PC-9 (cell line): ENCODE measurements at regions of chr4 and their contacts with region 1.

Region 1: DNA sequence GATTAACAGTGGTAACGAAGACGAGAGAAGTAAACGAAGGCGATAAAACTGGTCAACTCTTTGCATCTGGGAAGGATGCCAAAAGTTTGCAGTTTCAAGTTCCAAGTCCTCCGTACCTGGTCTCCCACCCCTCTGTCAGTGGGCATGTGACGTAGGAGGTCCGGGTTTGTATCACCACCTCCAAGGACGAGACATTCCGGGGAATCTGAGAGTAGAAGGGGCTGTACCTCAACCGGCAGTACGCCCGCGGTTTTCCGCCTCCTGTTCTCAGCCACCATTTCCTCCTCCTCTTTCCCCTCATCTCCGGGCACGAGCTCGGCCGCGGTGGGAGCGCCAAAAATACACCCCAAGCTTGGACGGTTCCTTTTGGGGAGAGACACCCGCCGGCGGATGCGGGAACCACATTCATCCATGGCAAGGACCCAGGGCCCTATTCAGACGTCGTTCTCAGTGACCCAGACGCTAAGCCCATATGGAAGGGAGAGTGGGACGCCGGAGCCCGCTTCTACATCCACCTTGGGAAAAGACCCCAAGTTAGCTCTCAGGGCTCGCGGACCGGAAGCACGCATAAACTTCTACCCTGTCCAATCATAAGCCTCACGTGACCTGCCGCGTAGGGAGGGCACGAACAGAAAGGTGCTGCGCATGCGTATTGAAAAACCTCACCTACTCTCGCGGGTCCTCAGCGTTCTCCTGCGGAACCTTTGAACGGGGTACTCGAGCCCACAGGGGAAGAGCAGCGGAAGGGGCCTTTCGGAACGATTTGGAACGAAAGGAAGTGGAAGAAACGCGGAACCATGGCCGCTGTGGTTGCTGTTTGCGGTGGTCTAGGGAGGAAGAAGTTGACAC is at the starts of genes HELQ and MRPS18C:
- DNase-seq: peak; percentile 87 to 91
- H3K4me3 ChIP-seq: peak within 1 kb of the TSS; percentile 91
- H3K27ac ChIP-seq: peak within 1 kb of the TSS; percentile 76
- H3K4me1 ChIP-seq: peaks cover 14% of the 10 kb centered on the region
- H3K27me3 ChIP-seq: no peaks in the 10 kb centered on the region
- CTCF ChIP-seq: peak; percentile 47; the same call in 1 of the 2 replicates
- total RNA-seq, gene HELQ: 7.0 and 10.6 TPM in 2 replicates
- total RNA-seq, gene MRPS18C: 18.6 and 37.8 TPM in 2 replicates

Region 2: GRCh38 chr4:83334425-83335241 is 120.9 kb before region 1 on chr4 and contains the start of gene HPSE:
- CTCF ChIA-PET with region 1: no interaction called
- POLR2A ChIA-PET with region 1: no interaction called
- intact Hi-C with region 1: loop called (anchors 2 kb)
- DNase-seq: peak; percentile 71 to 85
- H3K4me3 ChIP-seq: peak within 1 kb of the TSS; percentile 68
- H3K27ac ChIP-seq: no peak within 1 kb of the TSS
- H3K4me1 ChIP-seq: no peaks in the 10 kb centered on the region; the same call in 1 of the 2 replicates
- H3K27me3 ChIP-seq: no peaks in the 10 kb centered on the region
- CTCF ChIP-seq: no peak
- total RNA-seq, gene HPSE: 4.4 and 6.6 TPM in 2 replicates

Region 3: GRCh38 chr4:83731609-83732008 is 276.1 kb after region 1 on chr4:
- CTCF ChIA-PET with region 1: no interaction called
- POLR2A ChIA-PET with region 1: no interaction called
- intact Hi-C with region 1: no loop called
- DNase-seq: no peak
- H3K4me3 ChIP-seq: no peak overlapping the region
- H3K27ac ChIP-seq: no peak overlapping the region
- H3K4me1 ChIP-seq: no peaks in the 10 kb centered on the region
- H3K27me3 ChIP-seq: no peaks in the 10 kb centered on the region
- CTCF ChIP-seq: no peak